Heart right ventricle (tissue), 16 donors: ENCODE measurements at regions of chr16 and their contacts with region 1.

Region 1: GRCh38 chr16:20849587-20850390 is 43.5 kb downstream of the REXO5 start:
- DNase-seq: peak; percentile 68 to 69
- ATAC-seq: peak in 7 of 8 donors; percentile 16 to 49 (median 38)
- H3K4me3 ChIP-seq: peak overlapping the region in 1 of 10 donors; percentile 12
- H3K27ac ChIP-seq: peak overlapping the region in 8 of 10 donors; percentile 69 to 87 (median 74)
- H3K4me1 ChIP-seq: peaks cover 15 to 71% (median 51%) of the 10 kb centered on the region in 9 donors
- H3K27me3 ChIP-seq: no peaks in the 10 kb centered on the region
- CTCF ChIP-seq: peak; percentile 94 to 99 (median 98)

Region 2: DNA sequence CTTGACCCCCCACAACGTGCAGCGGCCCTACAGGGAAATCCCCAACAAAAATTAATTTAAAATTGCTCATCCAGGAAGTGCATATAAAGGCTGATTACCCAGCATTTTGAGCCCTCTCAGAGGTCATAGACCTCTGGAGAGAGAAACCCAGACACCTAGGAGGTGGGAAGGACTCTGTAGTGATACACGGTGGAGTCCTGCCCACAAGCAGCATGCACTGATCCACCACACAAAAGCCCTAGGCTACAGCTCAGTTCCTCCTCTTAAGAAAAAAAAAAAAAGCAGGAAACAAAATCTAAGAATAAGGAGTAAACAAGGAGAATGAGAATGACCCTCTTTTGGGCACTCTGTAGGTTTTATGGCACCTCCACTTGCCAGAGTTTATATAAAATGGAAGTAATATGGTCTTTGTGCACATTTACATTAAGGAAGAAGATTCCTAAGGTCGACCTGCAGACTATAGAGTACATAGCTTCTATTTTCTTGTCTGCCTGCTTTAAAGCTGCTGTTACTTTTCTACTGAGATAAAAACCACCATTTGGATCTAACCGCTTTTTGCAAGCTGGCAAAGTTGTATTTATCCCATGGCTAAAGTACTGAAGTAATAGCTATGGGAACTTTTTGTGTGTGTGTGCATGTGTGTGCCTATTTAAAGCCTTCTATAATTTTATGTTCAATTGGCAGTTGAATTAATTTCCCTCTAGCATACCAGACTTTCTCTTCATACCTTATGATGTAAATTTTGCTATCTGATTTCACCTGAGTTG is 199.2 kb before region 1 on chr16:
- intact Hi-C with region 1: no loop called
- DNase-seq: no peak
- ATAC-seq: no peak
- H3K4me3 ChIP-seq: no peak overlapping the region
- H3K27ac ChIP-seq: no peak overlapping the region
- H3K4me1 ChIP-seq: no peaks in the 10 kb centered on the region
- H3K27me3 ChIP-seq: no peaks in the 10 kb centered on the region
- CTCF ChIP-seq: no peak

Region 3: GRCh38 chr16:20704281-20704680 is 145.5 kb before region 1 on chr16:
- intact Hi-C with region 1: no loop called
- DNase-seq: no peak
- ATAC-seq: no peak
- H3K4me3 ChIP-seq: no peak overlapping the region
- H3K27ac ChIP-seq: no peak overlapping the region
- H3K4me1 ChIP-seq: no peaks in the 10 kb centered on the region
- H3K27me3 ChIP-seq: peaks cover 0 to under 1% (median 0%) of the 10 kb centered on the region in 7 donors
- CTCF ChIP-seq: no peak

Region 4: GRCh38 chr16:20806168-20807050 is 43.4 kb before region 1 on chr16 and contains the starts of genes ERI2 and REXO5:
- intact Hi-C with region 1: loop called in 4 of 10 experiments (anchors 2 to 5 kb)
- DNase-seq: peak; percentile 90 to 92
- ATAC-seq: peak; percentile 94 to 97 (median 96)
- H3K4me3 ChIP-seq: peak within 1 kb of the TSS; percentile 73 to 95 (median 88)
- H3K27ac ChIP-seq: peak within 1 kb of the TSS; percentile 89 to 97 (median 95)
- H3K4me1 ChIP-seq: peaks cover 0 to 32% (median 17%) of the 10 kb centered on the region in 9 donors
- H3K27me3 ChIP-seq: no peaks in the 10 kb centered on the region
- CTCF ChIP-seq: peak in 7 of 9 donors; percentile 32 to 64 (median 51)
- total RNA-seq, gene ERI2: 8.1 to 13.6 (median 12.0) TPM
- total RNA-seq, gene REXO5: 3.1 to 6.9 (median 5.2) TPM

Region 5: GRCh38 chr16:20900299-20901067 is 50.7 kb after region 1 on chr16 and contains the starts of genes DCUN1D3 and LYRM1:
- intact Hi-C with region 1: loop called in 8 of 10 experiments (anchors 2 to 10 kb)
- DNase-seq: peak; percentile 96 to 97
- ATAC-seq: peak; percentile 91 to 96 (median 94)
- H3K4me3 ChIP-seq: peak within 1 kb of the TSS; percentile 62 to 86 (median 76)
- H3K27ac ChIP-seq: peak within 1 kb of the TSS; percentile 95 to 99 (median 98)
- H3K4me1 ChIP-seq: peaks cover 5 to 79% (median 67%) of the 10 kb centered on the region in 9 donors
- H3K27me3 ChIP-seq: no peaks in the 10 kb centered on the region
- CTCF ChIP-seq: no peak
- total RNA-seq, gene DCUN1D3: 7.8 to 32.6 (median 11.2) TPM
- total RNA-seq, gene LYRM1: 37.4 to 69.1 (median 48.9) TPM

Region 6: DNA sequence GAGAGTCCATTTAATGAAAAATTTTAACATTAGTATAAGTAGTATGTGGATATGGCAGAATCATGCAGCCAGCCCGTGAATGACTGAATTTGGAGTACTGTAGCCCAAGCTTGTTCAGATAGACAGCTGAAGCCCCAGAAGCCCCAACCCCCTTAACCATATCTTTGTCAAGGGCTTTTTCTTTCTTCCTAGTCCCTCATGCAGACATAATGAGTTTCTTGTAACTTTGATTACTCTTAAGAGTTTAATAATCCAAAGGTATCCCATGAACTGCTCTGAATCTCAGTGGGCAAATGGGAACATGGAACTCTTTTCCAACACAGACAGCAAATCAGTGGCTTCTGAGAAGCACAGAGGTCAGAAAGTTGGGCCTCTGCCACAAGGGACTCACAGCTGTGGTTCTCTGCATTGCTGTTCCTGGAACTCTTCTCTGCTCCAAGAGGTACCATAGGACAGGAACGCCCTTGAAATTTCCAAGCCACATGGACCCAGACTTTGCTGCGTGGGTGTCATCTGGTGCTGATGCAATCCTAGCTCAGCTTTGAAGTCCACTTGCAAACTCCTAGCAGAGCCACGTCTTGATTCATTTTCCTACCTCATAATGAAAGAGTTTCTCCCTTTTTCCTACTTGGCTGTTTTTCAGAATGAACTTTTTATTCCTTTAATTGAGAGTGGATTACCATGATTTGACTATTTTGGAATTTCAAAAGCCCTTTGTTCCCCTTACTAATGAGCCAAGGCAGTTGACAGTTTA is 68.9 kb after region 1 on chr16:
- intact Hi-C with region 1: loop called in 1 of 10 experiments (anchors 5 kb)
- DNase-seq: peak; percentile 50 to 72
- ATAC-seq: peak in 7 of 8 donors; percentile 82 to 96 (median 87)
- H3K4me3 ChIP-seq: no peak overlapping the region
- H3K27ac ChIP-seq: peak overlapping the region in 8 of 10 donors; percentile 47 to 72 (median 60)
- H3K4me1 ChIP-seq: peaks cover 0 to 57% (median 21%) of the 10 kb centered on the region in 9 donors
- H3K27me3 ChIP-seq: no peaks in the 10 kb centered on the region
- CTCF ChIP-seq: no peak

Region 7: GRCh38 chr16:21001262-21001661 is 151.5 kb after region 1 on chr16:
- intact Hi-C with region 1: loop called in 2 of 10 experiments (anchors 10 kb)
- DNase-seq: no peak
- ATAC-seq: peak in 1 of 8 donors; percentile 35
- H3K4me3 ChIP-seq: no peak overlapping the region
- H3K27ac ChIP-seq: no peak overlapping the region
- H3K4me1 ChIP-seq: no peaks in the 10 kb centered on the region
- H3K27me3 ChIP-seq: no peaks in the 10 kb centered on the region
- CTCF ChIP-seq: peak in 7 of 9 donors; percentile 19 to 45 (median 32)

Region 8: DNA sequence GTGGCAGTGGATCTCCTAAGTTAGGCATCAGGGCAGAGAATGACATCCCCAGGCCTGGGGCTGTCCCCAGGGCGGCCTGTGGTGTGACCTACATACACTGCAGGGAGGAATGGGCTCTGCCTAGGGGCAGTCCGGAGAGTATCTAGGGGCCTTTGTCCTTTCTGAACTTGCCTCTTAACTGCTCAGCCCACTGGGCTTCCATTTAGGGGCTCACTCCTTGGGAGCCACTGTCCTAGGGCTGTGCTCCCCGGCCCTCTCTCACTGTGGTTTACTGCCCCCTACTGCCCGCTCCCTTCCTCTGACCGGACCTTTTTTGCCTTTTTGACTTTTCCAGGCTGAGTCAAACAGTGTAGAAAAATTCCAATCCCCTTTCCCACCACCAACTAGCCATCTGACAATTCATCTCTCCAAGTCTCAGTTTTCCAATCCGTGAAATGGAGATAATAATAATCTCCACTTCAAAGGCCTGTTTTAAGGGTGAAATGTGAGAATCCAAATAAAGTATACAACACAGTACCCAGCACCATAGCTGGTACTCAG is 234.0 kb after region 1 on chr16:
- intact Hi-C with region 1: loop called (anchors 1 to 5 kb)
- DNase-seq: peak; percentile 69
- ATAC-seq: peak; percentile 88 to 96 (median 92)
- H3K4me3 ChIP-seq: no peak overlapping the region
- H3K27ac ChIP-seq: no peak overlapping the region
- H3K4me1 ChIP-seq: peaks cover 0 to 2% (median 0%) of the 10 kb centered on the region in 9 donors
- H3K27me3 ChIP-seq: no peaks in the 10 kb centered on the region
- CTCF ChIP-seq: peak; percentile 66 to 87 (median 80)

Region 9: GRCh38 chr16:21101631-21102420 is 252.0 kb after region 1 on chr16:
- intact Hi-C with region 1: loop called in 1 of 10 experiments (anchors 5 kb)
- DNase-seq: peak in 1 of 2 donors; percentile 36
- ATAC-seq: peak in 6 of 8 donors; percentile 42 to 86 (median 62)
- H3K4me3 ChIP-seq: no peak overlapping the region
- H3K27ac ChIP-seq: no peak overlapping the region
- H3K4me1 ChIP-seq: peaks cover 0 to 15% (median 0%) of the 10 kb centered on the region in 9 donors
- H3K27me3 ChIP-seq: no peaks in the 10 kb centered on the region
- CTCF ChIP-seq: peak in 8 of 9 donors; percentile 5 to 62 (median 46)